GM12878 (cell line): ENCODE measurements at regions of chr6 and their contacts with region 1.

Region 1: DNA sequence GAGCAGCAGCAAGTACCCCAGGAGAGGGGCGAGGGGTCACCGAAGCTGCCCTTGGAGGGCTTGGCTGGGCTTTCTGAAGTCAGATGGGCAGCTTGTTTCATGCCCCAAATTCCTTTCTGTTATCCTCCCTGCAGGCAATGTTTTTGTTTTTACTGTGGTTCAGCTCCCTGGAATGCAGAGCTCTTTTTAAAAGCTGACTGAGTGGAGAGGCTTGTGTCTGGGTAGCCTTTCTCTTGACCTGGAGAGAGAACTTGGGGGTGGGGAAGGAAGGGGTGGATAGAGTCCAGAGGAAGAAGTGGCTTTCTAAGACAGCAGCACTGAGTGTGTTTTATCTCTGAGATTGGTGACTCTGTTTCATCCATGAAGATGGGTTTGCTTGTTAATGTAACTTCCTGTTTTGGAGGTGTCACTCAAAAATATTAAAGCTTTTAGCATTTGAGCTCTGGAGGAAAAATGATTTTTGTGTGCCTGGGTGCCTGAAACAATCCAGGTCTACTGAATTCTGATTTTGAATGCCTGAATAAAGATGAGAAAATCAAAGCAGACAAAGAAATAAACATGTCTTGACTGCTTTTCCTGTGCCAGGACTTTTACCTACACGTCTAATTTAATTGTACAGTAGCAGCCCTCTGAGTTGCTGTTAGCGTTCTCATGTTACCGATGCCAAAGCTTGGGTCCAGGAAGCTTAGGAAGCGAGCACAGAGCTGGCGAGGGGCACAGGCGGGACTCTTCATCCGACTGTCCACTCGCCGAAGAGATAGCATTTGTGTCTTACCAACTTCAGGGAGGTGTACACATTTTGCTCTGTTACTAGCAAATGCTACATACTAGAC is 78.2 kb upstream of the EEF1E1 start:
- DNase-seq: no peak
- ATAC-seq: no peak
- H3K4me3 ChIP-seq: no peak overlapping the region
- H3K27ac ChIP-seq: no peak overlapping the region
- H3K4me1 ChIP-seq: no peaks in the 10 kb centered on the region
- H3K27me3 ChIP-seq: no peaks in the 10 kb centered on the region
- CTCF ChIP-seq: no peak
- EP300 ChIP-seq: no peak
- POLR2A ChIP-seq: no peak
- RAD21 ChIP-seq: no peak

Region 2: DNA sequence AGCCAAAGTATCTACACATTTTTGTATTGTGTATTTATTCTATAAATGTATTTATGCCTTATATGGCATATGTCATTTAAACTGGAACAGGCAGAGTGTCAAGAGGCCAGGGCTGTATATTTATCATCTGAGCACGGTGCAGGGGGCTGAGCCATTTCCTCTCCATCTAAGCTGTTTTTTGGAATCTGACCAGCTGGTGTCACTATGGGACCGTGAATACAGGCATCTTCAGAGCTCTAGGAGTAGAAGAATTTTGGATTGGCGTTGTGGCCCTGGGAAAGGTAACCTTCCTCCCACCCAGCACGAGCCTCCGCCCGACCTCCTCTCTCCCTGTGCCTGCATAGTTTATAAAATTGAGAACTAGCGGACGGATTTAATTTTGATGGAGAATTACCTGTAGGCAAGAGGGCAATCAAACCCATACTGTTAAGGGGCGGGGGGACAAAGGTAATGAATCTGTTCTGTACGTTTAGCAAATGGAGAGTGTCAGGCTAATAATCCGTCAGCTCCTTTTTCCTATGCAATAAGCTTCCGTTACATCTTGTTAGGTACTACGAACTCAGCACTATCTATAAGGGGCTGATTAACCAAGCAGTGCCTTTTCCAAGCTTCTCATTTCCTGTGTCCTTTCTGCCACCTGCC is 49.2 kb before region 1 on chr6:
- CTCF ChIA-PET with region 1: interaction called, 3 read pairs
- POLR2A ChIA-PET with region 1: no interaction called
- RAD21 ChIA-PET with region 1: interaction called, 7 read pairs
- SMC1A ChIA-PET with region 1: interaction called, 10 read pairs
- in situ Hi-C with region 1: no loop called
- intact Hi-C with region 1: no loop called
- DNase-seq: no peak
- ATAC-seq: peak; percentile 91
- H3K4me3 ChIP-seq: no peak overlapping the region
- H3K27ac ChIP-seq: no peak overlapping the region
- H3K4me1 ChIP-seq: no peaks in the 10 kb centered on the region
- H3K27me3 ChIP-seq: peaks cover 0 to 5% of the 10 kb centered on the region in 2 experiments; a peak in 2 of 4 replicates
- CTCF ChIP-seq: peak; percentile 35 to 76 (median 41); a peak in 4 of 6 replicates
- EP300 ChIP-seq: no peak
- POLR2A ChIP-seq: no peak
- RAD21 ChIP-seq: peak; percentile 79

Region 3: GRCh38 chr6:9020001-9020400 is 839.5 kb after region 1 on chr6:
- CTCF ChIA-PET with region 1: no interaction called
- POLR2A ChIA-PET with region 1: interaction called, 10 read pairs
- RAD21 ChIA-PET with region 1: no interaction called
- SMC1A ChIA-PET with region 1: no interaction called
- in situ Hi-C with region 1: no loop called
- intact Hi-C with region 1: no loop called
- DNase-seq: no peak
- ATAC-seq: no peak
- H3K4me3 ChIP-seq: no peak overlapping the region
- H3K27ac ChIP-seq: no peak overlapping the region
- H3K4me1 ChIP-seq: no peaks in the 10 kb centered on the region
- H3K27me3 ChIP-seq: no peaks in the 10 kb centered on the region
- CTCF ChIP-seq: no peak
- EP300 ChIP-seq: no peak
- POLR2A ChIP-seq: no peak
- RAD21 ChIP-seq: no peak